Stomach (tissue), 19 donors: ENCODE measurements at regions of chr13 and their contacts with region 1.

Region 1: DNA sequence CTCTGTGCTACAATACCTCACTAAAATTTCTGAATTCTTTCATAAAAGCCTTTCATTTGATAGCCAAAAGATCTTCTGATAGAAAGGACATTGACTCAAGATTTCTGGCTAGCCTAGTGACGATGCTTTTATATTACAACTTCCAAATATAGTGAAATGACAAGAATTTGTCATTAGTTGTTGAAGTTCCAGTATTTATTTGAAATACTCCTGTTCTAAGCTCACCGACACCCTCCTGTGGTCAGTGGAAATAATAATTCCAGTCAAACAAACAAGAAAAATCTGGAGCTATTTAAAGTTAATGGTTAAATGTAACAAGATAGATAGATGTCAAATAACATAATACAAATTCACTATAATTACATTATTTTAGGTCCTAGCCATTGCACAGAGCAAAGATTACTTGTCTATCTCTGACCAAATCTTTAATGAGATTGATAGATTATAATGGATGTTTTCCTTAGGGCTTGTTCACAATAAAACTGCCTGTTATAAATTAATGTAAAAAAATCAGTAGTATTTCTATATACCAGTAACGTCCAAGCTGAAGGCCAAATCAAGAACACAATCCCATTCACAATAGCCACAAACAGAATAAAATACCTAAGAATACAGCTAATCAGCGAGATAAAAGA is 195.5 kb downstream of the RGCC start:
- DNase-seq: peak in 1 of 2 donors; percentile 79
- H3K4me3 ChIP-seq: no peak overlapping the region
- H3K27ac ChIP-seq: no peak overlapping the region
- H3K4me1 ChIP-seq: peaks cover 0 to 26% (median 14%) of the 10 kb centered on the region in 4 donors
- H3K27me3 ChIP-seq: no peaks in the 10 kb centered on the region
- CTCF ChIP-seq: peak in 4 of 7 experiments; percentile 44 to 57 (median 51)
- EP300 ChIP-seq: no peak
- POLR2A ChIP-seq: no peak

Region 2: DNA sequence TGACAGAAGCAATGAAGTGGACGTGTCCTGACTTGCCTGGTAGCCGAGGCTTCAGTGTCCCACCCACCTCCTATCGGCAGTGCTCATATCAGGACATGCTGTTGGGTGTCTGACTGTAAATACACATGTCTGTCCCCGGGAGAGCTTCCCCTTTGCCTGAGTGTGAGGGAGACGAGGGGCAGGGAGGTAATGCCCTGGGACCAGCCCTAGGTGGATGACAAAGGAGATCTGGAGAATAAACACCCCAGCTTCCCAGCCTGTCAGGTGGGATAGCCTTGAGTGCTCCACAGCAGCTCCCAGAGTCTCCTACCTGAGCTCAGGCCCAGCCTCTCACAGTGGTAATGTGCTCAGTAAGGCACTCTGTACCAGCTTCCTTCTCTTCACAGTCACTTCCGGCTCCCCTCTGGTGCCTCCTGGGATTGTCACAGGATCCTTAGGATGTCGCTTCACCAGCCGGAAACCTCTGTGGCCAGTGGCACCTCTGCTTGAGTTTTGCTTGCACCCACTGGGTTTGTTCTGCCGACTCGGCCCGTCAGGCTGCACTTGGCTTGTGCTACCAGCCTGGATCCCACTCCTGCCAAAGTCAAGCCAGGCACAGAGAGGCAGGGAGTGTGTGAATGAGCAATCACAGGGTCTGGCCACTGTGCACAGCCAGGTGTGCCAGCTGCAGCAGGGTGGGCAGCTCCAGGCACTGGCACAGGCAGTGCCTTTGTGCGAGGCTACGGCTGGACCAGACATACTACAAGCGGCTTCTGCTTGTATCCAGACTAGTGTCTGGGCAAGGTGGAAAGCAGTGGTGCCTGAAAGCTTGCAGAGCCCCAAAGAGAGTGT is 249.9 kb before region 1 on chr13:
- intact Hi-C with region 1: loop called (anchors 10 kb)
- DNase-seq: no peak
- H3K4me3 ChIP-seq: no peak overlapping the region
- H3K27ac ChIP-seq: no peak overlapping the region
- H3K4me1 ChIP-seq: no peaks in the 10 kb centered on the region
- H3K27me3 ChIP-seq: no peaks in the 10 kb centered on the region
- CTCF ChIP-seq: no peak
- EP300 ChIP-seq: no peak
- POLR2A ChIP-seq: no peak

Region 3: GRCh38 chr13:41502673-41503072 is 150.2 kb before region 1 on chr13:
- intact Hi-C with region 1: no loop called
- DNase-seq: peak in 1 of 2 donors; percentile 22
- H3K4me3 ChIP-seq: no peak overlapping the region
- H3K27ac ChIP-seq: no peak overlapping the region
- H3K4me1 ChIP-seq: no peaks in the 10 kb centered on the region
- H3K27me3 ChIP-seq: no peaks in the 10 kb centered on the region
- CTCF ChIP-seq: no peak
- EP300 ChIP-seq: no peak
- POLR2A ChIP-seq: no peak